Right cardiac atrium (tissue), 5 donors: ENCODE measurements at regions of chr15 and their contacts with region 1.

Region 1: GRCh38 chr15:101024073-101024695 is 105.0 kb downstream of the LRRK1 start:
- DNase-seq: peak; percentile 67 to 71 (median 68)
- ATAC-seq: peak; percentile 74 to 76
- H3K4me3 ChIP-seq: no peak overlapping the region
- H3K27ac ChIP-seq: peak overlapping the region; percentile 54
- H3K4me1 ChIP-seq: peaks cover 9% of the 10 kb centered on the region
- H3K27me3 ChIP-seq: no peaks in the 10 kb centered on the region

Region 2: DNA sequence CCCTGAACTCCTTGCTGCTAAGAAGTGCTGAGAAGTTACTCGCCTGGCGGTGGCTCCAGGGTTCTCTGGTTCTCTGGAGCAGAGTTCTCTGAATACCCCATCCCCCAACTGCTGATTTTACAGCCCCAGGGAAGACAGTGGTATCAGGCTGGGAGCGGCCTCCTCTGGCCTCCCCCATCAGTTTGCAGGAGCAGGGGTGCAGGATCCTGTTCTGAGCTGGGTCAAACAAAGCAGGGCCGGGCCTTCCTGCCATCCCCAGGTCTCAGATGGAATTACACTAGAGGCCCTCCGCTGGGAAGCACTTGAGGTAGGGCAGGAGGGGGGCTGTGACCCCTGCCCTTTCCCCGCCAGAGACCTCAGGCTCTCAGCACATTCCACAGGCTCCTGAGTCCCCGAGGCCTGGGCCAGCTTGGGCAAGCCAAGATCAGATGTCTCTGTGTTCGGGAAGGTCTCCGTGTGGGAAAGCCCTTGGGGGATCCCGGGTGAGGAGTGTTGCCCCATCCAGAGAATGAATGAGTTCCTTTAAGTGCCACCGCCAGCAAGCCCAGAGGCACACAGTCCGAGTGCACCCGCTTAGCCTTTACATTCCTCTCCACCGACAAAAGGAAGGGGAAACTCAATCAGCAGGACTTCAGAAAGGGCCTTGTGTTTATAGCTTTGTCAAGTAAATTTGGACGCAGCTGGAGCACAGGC is 44.9 kb after region 1 on chr15:
- intact Hi-C with region 1: loop called in 1 of 4 experiments (anchors 2 kb)
- DNase-seq: peak in 2 of 3 donors; percentile 55 to 68
- ATAC-seq: peak in 1 of 2 donors; percentile 2
- H3K4me3 ChIP-seq: no peak overlapping the region
- H3K27ac ChIP-seq: peak overlapping the region; percentile 38
- H3K4me1 ChIP-seq: peaks cover 11% of the 10 kb centered on the region
- H3K27me3 ChIP-seq: no peaks in the 10 kb centered on the region